CD4-positive, alpha-beta memory T cell (primary cell): ENCODE measurements at regions of chr18 and their contacts with region 1.

Region 1: DNA sequence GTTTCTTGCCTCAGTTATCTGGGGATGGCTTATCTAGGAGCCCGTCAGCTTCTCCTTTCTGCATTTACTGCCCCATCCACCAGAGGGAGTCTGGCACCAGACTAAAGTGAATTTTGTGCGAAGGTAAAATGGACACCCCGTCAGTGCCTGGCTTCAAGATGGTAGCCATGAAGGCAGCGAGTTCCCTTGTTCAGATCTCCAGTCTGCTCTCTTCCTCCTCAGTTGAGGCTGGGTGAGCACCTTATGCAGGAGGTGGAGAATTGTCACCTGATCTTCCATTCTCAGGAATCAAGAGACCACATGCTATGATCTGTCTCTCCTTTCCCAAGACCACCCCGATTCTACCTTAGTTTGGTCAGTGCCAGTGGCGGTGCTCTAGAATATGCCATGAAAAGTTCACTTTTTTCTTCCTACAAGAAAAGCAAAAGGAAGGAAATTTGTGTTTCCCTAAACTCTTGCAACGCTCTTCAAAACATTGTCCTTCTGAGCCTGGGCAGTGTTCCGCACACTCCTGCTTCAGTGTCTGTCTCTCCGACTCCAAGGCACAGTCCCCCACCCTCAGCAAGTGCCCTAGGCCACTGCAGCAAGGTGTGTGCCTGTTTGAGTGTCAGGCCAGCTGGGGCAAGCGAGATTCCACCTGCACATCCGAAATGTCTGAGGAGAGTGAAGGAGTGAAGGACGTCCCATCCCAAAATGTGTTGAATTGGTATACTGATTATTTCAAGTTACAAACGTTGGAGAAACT is 168.6 kb downstream of the SS18 start:
- DNase-seq: peak; percentile 22 to 42 (median 28)
- H3K4me3 ChIP-seq: no peak overlapping the region
- H3K4me3 Mint-ChIP-seq: no peak overlapping the region
- H3K27ac ChIP-seq: no peak overlapping the region
- H3K27ac Mint-ChIP-seq: peak overlapping the region in 1 of 7 donors; percentile 16
- H3K4me1 ChIP-seq: no peaks in the 10 kb centered on the region
- H3K4me1 Mint-ChIP-seq: peaks cover 0 to 3% (median 0%) of the 10 kb centered on the region in 4 donors
- H3K27me3 ChIP-seq: no peaks in the 10 kb centered on the region
- H3K27me3 Mint-ChIP-seq: peaks cover 0 to 6% of the 10 kb centered on the region in 2 donors

Region 2: DNA sequence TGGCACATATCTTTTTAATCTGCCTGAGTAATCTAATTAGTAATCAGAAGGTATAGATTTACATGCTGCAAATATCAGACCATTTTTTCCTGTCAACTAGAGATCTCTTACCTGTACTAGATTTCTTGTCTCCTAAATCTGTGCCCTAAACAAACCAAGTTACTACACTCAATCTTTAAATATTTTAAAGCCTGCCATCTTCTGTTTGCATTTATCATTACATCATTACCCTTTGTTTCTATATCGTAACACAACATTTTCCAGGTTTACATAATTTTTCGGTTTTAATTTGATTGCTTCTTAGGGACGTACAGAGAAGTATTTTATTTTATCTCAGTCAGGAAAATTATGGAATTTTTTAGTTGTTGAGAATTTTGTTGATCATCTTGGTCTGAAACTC is 237.5 kb after region 1 on chr18:
- CTCF ChIA-PET with region 1: interaction called, 8 read pairs
- POLR2A ChIA-PET with region 1: no interaction called
- intact Hi-C with region 1: loop called (anchors 2 kb)
- DNase-seq: peak in 4 of 5 donors; percentile 9 to 18 (median 10)
- H3K4me3 ChIP-seq: no peak overlapping the region
- H3K4me3 Mint-ChIP-seq: no peak overlapping the region
- H3K27ac ChIP-seq: no peak overlapping the region
- H3K27ac Mint-ChIP-seq: no peak overlapping the region
- H3K4me1 ChIP-seq: no peaks in the 10 kb centered on the region
- H3K4me1 Mint-ChIP-seq: peaks cover 0 to 5% (median 0%) of the 10 kb centered on the region in 4 donors
- H3K27me3 ChIP-seq: no peaks in the 10 kb centered on the region
- H3K27me3 Mint-ChIP-seq: peaks cover 3% of the 10 kb centered on the region in 2 donors

Region 3: DNA sequence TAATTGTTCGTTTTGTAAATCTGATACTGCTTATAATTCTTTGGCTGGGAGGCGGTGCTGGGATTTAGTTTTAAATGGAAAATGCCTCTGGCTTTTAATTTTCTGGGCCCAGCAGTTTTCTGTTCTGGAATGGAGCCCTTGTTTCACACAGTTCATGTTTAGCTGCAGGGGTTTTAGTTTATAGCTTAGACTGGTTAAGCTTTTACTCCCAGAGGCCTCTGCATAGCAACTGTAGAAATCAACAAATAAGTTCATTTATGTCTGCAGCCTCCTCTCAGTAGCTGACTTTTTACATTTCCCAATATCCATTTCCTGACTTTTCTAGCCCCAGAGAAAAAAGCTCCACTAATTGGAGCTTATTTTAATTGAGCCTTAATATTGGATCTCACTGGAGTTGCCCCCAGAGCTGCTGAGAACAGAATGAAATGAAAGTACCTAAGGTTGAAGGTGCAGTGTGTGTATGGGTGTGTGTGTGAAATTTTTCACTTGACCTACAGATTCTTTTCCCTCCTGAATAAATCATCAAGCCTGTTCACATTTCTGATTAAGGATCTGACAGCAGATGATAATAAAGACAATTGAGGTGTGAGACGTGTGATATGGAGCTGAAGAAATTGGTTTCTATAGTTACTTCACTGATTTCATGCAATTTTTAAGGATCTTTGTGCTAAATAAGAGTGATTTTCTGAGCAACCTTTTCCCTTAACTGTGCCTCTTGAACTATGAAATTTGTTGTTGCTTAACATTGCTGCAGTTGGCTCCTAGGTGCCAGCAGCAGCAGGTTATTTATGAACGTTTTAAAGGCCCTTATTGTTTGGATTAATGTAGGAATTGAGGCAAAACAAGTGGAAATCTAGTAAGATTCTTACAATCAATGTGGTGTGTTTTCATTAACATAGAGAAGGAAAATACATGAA is 414.0 kb after region 1 on chr18:
- CTCF ChIA-PET with region 1: interaction called, 3 read pairs
- POLR2A ChIA-PET with region 1: no interaction called
- intact Hi-C with region 1: loop called (anchors 1 kb)
- DNase-seq: no peak
- H3K4me3 ChIP-seq: no peak overlapping the region
- H3K4me3 Mint-ChIP-seq: no peak overlapping the region
- H3K27ac ChIP-seq: no peak overlapping the region
- H3K27ac Mint-ChIP-seq: peak overlapping the region in 4 of 7 donors; percentile 3 to 48 (median 16)
- H3K4me1 ChIP-seq: no peaks in the 10 kb centered on the region
- H3K4me1 Mint-ChIP-seq: no peaks in the 10 kb centered on the region
- H3K27me3 ChIP-seq: no peaks in the 10 kb centered on the region
- H3K27me3 Mint-ChIP-seq: no peaks in the 10 kb centered on the region